Common myeloid progenitor, CD34-positive (primary cell): ENCODE measurements at regions of chr5 and their contacts with region 1.

Region 1: GRCh38 chr5:142699184-142699720 is 13.4 kb upstream of the FGF1 start:
- DNase-seq: peak; percentile 74 to 88 (median 82)
- H3K4me3 ChIP-seq: no peak overlapping the region
- H3K27ac ChIP-seq: no peak overlapping the region
- H3K4me1 ChIP-seq: no peaks in the 10 kb centered on the region
- H3K27me3 ChIP-seq: no peaks in the 10 kb centered on the region

Region 2: DNA sequence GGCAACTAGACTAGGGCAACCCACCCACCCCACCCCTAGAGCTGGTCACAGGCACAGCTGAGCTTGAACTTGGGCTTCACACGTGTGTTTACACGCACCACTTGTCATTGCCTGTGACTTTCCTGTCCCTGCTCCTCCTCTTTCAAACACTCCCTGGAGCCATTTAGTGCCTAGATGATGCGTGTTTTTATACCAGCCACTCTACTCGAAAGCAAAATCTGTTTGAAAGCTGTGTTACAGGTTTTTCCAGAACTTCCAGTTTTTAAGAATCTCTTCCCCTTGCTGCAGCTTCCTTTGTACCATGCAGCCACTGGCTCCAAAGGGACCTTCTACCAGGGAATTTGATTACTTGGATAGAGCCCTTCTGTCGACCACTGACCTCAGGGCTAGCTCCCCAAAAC is 295.7 kb before region 1 on chr5:
- CTCF ChIA-PET with region 1: no interaction called
- POLR2A ChIA-PET with region 1: no interaction called
- DNase-seq: no peak
- H3K4me3 ChIP-seq: no peak overlapping the region
- H3K27ac ChIP-seq: no peak overlapping the region
- H3K4me1 ChIP-seq: no peaks in the 10 kb centered on the region
- H3K27me3 ChIP-seq: peaks cover 0 to 7% (median 2%) of the 10 kb centered on the region in 5 experiments

Region 3: DNA sequence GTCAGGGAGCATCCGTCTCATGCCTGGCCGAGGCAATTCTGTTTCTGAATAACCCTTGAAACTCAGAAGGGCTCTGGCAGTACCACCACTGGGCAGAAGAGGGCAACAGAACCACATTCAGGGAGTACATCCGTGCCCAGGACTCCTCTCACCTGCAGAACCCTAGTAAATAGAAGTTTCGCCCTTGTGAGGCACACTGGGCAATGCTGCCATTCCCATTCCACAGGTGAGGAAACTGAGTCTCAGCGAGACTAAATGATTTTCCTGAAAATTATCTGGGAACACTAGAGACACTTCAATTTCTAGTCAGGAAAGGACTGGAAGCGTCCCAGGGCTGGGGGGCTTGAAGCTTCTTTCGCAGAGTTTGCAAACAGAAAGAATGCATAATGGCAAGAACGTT is 88.1 kb before region 1 on chr5:
- CTCF ChIA-PET with region 1: interaction called, 14 read pairs
- POLR2A ChIA-PET with region 1: no interaction called
- DNase-seq: peak; percentile 45 to 75 (median 65)
- H3K4me3 ChIP-seq: no peak overlapping the region
- H3K27ac ChIP-seq: no peak overlapping the region
- H3K4me1 ChIP-seq: no peaks in the 10 kb centered on the region
- H3K27me3 ChIP-seq: peaks cover 0 to 10% (median 3%) of the 10 kb centered on the region in 5 experiments

Region 4: DNA sequence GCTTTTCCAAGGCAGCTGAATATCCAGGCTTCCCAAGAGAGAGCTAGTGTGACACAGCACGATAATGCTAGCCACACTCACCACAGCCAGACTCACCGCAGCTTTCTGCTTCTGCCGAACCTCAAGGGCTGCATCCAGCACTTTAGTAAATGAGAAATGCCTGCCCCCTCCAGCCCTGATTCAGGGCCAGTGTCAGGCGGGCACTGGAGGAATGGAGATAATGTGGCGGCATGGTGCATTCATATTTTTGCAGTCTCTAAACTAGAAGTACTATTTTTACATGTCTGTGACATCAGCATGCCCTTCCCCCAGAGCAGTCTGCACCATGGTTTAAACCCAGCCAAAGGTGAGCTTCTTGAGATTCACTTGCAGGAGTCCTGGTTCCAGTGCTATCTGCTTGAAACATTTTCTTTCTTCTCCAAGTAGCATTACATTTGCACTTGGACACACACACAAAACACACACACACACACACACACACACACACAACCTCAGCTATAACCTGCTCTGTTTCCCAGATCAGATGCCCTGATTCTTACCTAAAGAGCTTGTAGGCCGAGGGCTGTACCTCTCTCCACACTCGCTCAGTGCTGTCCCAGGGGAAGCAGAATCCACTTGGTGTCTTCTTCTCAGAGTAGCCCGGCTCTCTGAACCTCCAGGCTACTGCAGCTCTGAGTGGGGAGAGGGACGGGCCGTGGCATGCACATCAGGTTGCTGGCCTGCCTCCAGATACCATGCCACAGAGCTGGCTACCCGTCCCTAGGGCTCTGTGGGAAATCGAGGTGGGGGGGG is 13.6 kb before region 1 on chr5 and contains the start of gene FGF1:
- CTCF ChIA-PET with region 1: interaction called, 21 read pairs
- POLR2A ChIA-PET with region 1: no interaction called
- DNase-seq: no peak
- H3K4me3 ChIP-seq: no peak within 1 kb of the TSS
- H3K27ac ChIP-seq: no peak within 1 kb of the TSS
- H3K4me1 ChIP-seq: no peaks in the 10 kb centered on the region
- H3K27me3 ChIP-seq: peaks cover 0 to 2% (median 0%) of the 10 kb centered on the region in 5 experiments